Activated naive CD4-positive, alpha-beta T cell treated with anti-CD3 and anti-CD28 coated beads, Interleukin-2, amount 10 ng/mL, durations not matched to agents 7 days and 5 days (primary cell): ENCODE measurements at regions of chr12 and their contacts with region 1.

Region 1: GRCh38 chr12:49763006-49763591 is 21.7 kb downstream of the TMBIM6 start:
- DNase-seq: peak; percentile 87
- H3K4me3 Mint-ChIP-seq: peak overlapping the region; percentile 19
- H3K27ac Mint-ChIP-seq: peak overlapping the region; percentile 91
- H3K4me1 Mint-ChIP-seq: peaks cover 44% of the 10 kb centered on the region
- H3K27me3 Mint-ChIP-seq: peaks cover 7% of the 10 kb centered on the region

Region 2: GRCh38 chr12:49740930-49741881 is 21.9 kb before region 1 on chr12 and contains the start of gene TMBIM6:
- CTCF ChIA-PET with region 1: interaction called, 42 read pairs
- DNase-seq: peak; percentile 99
- H3K4me3 Mint-ChIP-seq: peak within 1 kb of the TSS; percentile 80
- H3K27ac Mint-ChIP-seq: peak within 1 kb of the TSS; percentile 97
- H3K4me1 Mint-ChIP-seq: peaks cover 40% of the 10 kb centered on the region
- H3K27me3 Mint-ChIP-seq: peaks cover 4% of the 10 kb centered on the region

Region 3: DNA sequence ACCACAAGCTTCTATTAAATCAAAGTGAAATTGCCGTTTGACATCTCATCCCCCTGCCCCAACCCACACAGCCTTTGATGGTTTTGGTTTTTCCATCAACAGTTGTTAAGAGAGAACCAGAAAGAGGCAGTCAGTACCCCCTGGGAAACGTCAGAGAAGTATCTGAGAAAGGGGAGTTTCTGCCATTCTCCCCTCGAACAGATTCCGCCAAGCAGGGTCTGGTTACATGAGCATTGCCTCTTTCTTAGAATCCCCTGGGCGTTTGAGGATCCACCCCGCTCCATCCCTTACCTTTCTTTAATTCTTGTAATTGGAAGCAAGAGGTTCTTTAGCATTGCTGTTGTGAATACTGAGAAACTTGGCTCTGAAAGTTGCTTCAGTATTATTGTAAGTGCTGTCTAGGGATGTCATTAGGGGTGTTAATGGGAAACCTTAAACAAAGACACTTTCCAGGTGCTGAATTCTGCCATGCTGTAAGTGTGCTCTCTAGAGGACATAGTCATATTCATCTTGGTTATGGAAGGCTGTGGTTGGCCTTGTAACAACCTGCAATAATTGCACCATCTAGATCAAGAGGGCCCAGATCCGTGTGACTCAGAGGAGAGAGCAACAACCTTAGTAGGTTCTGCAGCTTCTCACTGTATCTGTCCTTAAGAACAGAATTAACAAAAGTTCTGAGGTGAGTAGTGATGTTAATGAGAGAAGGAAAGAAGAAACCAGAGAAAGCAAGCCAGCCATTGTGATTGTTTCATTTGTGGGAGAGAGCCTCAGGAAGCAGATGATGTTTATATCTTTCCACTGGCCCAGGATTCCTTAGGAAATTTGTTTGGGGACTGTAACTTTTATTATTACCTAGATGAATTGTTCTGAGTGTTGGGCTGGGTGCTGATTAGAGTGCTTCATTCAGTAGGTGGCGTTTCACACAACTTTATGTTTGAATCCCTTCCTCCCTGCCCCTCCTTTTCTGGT is 12.8 kb before region 1 on chr12:
- CTCF ChIA-PET with region 1: interaction called, 20 read pairs
- DNase-seq: peak; percentile 37
- H3K4me3 Mint-ChIP-seq: peak overlapping the region; percentile 10
- H3K27ac Mint-ChIP-seq: peak overlapping the region; percentile 78
- H3K4me1 Mint-ChIP-seq: peaks cover 66% of the 10 kb centered on the region
- H3K27me3 Mint-ChIP-seq: no peaks in the 10 kb centered on the region

Region 4: DNA sequence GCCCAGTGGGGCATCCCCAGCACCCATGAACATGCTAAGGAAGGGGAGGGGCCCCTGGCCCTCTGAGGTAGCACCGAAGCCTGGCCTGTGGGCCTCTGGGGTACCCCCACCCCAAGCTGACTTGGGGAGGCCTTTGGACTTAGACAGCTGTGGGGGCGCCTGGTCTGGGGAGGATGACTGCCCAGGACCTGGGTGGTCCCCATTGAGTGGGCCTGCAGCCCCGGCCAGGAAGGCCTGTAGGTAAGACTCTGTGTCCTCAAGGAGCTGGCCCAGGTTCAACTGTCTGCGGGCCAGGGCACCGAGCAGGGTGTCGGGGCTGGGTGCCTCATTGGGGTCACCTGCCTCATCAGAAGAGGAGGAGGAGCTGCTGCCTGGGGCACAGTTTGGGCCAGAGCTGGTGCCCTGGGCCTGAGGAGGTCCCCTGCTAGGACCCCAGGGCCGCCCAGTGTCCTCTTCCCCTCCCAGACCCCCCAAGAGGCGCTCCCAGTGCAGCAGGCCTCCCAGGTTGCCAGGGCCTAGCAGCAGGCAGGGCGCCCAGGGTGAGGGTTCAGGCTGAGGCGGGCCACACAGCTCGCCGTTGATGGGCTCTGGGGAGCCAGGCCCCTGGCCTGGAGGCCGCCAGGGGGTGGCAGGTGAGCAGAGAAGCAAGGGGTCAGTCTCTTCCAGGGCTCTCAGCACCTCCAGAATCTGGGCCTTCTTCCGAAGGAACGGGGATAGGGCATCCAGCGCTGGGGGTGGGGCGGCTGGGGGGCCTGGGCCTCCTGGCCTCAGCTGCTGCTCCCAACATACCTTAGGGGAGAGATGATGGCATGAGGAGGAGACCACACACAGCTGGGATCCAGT is 33.7 kb after region 1 on chr12:
- CTCF ChIA-PET with region 1: no interaction called
- DNase-seq: no peak
- H3K4me3 Mint-ChIP-seq: no peak overlapping the region
- H3K27ac Mint-ChIP-seq: no peak overlapping the region
- H3K4me1 Mint-ChIP-seq: peaks cover 2% of the 10 kb centered on the region
- H3K27me3 Mint-ChIP-seq: no peaks in the 10 kb centered on the region

Region 5: GRCh38 chr12:49838973-49839633 is 76.0 kb after region 1 on chr12:
- CTCF ChIA-PET with region 1: interaction called, 11 read pairs
- DNase-seq: peak; percentile 63
- H3K4me3 Mint-ChIP-seq: no peak overlapping the region
- H3K27ac Mint-ChIP-seq: no peak overlapping the region
- H3K4me1 Mint-ChIP-seq: peaks cover 32% of the 10 kb centered on the region
- H3K27me3 Mint-ChIP-seq: no peaks in the 10 kb centered on the region